Activated CD4-positive, alpha-beta T cell treated with anti-CD3 and anti-CD28 coated beads, Interleukin-2, amount 10 ng/mL, durations not matched to agents 7 days and 5 days (primary cell): ENCODE measurements at regions of chr5 and their contacts with region 1.

Region 1: GRCh38 chr5:55037046-55037771 is 13.2 kb downstream of the GZMK start:
- DNase-seq: peak; percentile 81
- H3K4me3 Mint-ChIP-seq: no peak overlapping the region
- H3K27ac Mint-ChIP-seq: peak overlapping the region; percentile 95
- H3K4me1 Mint-ChIP-seq: peaks cover 52% of the 10 kb centered on the region
- H3K27me3 Mint-ChIP-seq: no peaks in the 10 kb centered on the region

Region 2: GRCh38 chr5:54874373-54874921 is 162.8 kb before region 1 on chr5:
- CTCF ChIA-PET with region 1: no interaction called
- POLR2A ChIA-PET with region 1: no interaction called
- DNase-seq: no peak
- H3K4me3 Mint-ChIP-seq: no peak overlapping the region
- H3K27ac Mint-ChIP-seq: no peak overlapping the region
- H3K4me1 Mint-ChIP-seq: peaks cover 11% of the 10 kb centered on the region
- H3K27me3 Mint-ChIP-seq: peaks cover 66% of the 10 kb centered on the region

Region 3: GRCh38 chr5:54993318-54993717 is 43.9 kb before region 1 on chr5:
- CTCF ChIA-PET with region 1: no interaction called
- POLR2A ChIA-PET with region 1: no interaction called
- DNase-seq: no peak
- H3K4me3 Mint-ChIP-seq: no peak overlapping the region
- H3K27ac Mint-ChIP-seq: no peak overlapping the region
- H3K4me1 Mint-ChIP-seq: peaks cover 33% of the 10 kb centered on the region
- H3K27me3 Mint-ChIP-seq: peaks cover 2% of the 10 kb centered on the region

Region 4: DNA sequence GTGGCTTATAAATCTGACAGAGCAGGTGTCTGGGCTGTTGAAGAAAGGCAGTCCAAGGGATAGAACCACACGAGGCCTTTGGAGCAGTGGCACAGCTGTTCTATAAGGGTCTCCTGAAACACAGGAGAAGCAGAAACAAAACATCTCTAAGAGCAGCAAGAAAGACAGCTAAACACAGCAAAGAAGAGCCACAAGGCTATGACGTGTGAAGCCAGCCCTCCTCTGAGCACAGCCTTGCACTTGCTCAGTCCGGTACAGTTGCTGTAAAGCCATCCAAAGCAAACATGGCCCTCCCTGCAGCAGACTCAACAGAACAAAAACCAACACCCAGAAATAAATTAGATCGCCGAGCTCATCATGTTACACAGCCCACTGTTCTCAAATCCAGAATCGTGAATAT is 15.8 kb before region 1 on chr5:
- CTCF ChIA-PET with region 1: interaction called, 14 read pairs
- POLR2A ChIA-PET with region 1: no interaction called
- DNase-seq: no peak
- H3K4me3 Mint-ChIP-seq: no peak overlapping the region
- H3K27ac Mint-ChIP-seq: no peak overlapping the region
- H3K4me1 Mint-ChIP-seq: peaks cover 46% of the 10 kb centered on the region
- H3K27me3 Mint-ChIP-seq: peaks cover under 1% of the 10 kb centered on the region

Region 5: GRCh38 chr5:55052383-55052931 is 15.2 kb after region 1 on chr5:
- CTCF ChIA-PET with region 1: interaction called, 13 read pairs
- POLR2A ChIA-PET with region 1: no interaction called
- DNase-seq: no peak
- H3K4me3 Mint-ChIP-seq: no peak overlapping the region
- H3K27ac Mint-ChIP-seq: no peak overlapping the region
- H3K4me1 Mint-ChIP-seq: peaks cover 29% of the 10 kb centered on the region
- H3K27me3 Mint-ChIP-seq: no peaks in the 10 kb centered on the region

Region 6: DNA sequence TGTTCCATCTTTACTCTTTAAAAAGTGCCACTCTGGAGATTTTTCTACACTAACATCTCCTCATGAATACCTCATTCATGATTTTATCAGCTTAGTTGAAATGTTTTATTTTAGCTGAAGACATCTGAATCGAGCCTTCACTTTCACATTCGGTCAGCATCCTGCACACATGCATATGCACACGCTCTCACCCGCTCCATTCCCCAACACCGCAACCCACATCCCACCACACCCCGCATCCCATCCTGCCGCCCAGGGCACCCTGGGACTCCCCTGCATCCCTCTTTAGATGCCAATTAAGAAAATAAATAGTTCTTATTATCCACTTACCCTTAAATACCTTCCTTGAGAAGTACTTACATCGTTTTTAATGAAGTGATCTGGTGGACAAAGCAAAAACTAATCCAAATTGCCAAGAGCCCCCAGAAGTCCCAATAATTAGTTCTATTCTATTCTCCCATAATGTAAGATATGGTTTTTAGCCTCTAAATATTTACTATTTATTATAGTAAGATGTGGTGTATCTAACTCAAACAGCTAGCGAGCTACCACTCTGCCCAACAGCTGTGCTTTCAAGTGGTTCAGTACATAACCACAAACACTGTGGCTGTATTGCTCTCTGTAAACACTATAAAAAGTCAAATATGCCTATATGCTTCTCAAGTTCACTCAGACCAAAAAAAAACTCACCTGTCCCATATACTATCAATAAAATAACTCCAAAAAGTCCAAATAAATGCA is 25.0 kb after region 1 on chr5:
- CTCF ChIA-PET with region 1: interaction called, 23 read pairs
- POLR2A ChIA-PET with region 1: interaction called, 3 read pairs
- DNase-seq: peak; percentile 86
- H3K4me3 Mint-ChIP-seq: peak overlapping the region; percentile 58
- H3K27ac Mint-ChIP-seq: peak overlapping the region; percentile 91
- H3K4me1 Mint-ChIP-seq: peaks cover 80% of the 10 kb centered on the region
- H3K27me3 Mint-ChIP-seq: peaks cover 3% of the 10 kb centered on the region

Region 7: GRCh38 chr5:55081541-55081940 is 44.3 kb after region 1 on chr5:
- CTCF ChIA-PET with region 1: no interaction called
- POLR2A ChIA-PET with region 1: no interaction called
- DNase-seq: no peak
- H3K4me3 Mint-ChIP-seq: no peak overlapping the region
- H3K27ac Mint-ChIP-seq: no peak overlapping the region
- H3K4me1 Mint-ChIP-seq: peaks cover 13% of the 10 kb centered on the region
- H3K27me3 Mint-ChIP-seq: peaks cover 9% of the 10 kb centered on the region

Region 8: GRCh38 chr5:55254802-55255201 is 217.6 kb after region 1 on chr5:
- CTCF ChIA-PET with region 1: no interaction called
- POLR2A ChIA-PET with region 1: no interaction called
- DNase-seq: no peak
- H3K4me3 Mint-ChIP-seq: no peak overlapping the region
- H3K27ac Mint-ChIP-seq: no peak overlapping the region
- H3K4me1 Mint-ChIP-seq: no peaks in the 10 kb centered on the region
- H3K27me3 Mint-ChIP-seq: no peaks in the 10 kb centered on the region